Endothelial cell of umbilical vein (primary cell): ENCODE measurements at regions of chr2 and their contacts with region 1.

Region 1: DNA sequence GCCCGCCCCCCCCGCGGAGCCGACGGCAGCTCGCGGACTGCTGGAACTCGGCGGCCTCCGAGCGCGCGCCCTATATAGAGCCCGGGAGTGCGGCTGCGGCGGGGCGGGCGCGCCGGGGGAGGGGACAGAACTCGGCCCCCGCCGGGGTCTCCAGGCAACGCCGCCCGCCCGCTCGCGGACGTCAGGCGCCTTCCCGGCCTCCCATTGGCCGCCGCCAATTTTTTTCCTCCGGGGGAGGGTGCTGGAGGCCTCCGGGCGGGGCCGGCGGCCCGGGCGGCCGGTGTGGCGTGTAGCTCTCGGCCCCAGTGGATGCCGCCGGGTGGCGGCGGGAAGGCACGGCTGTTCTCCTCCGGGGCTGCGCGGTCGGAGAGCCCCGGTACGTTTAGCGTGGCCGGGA is at the start of gene ZFP36L2:
- DNase-seq: peak; percentile 91
- H3K4me3 ChIP-seq: peak within 1 kb of the TSS; percentile 71 to 93 (median 90)
- H3K27ac ChIP-seq: peak within 1 kb of the TSS; percentile 88
- H3K4me1 ChIP-seq: peaks cover 31% of the 10 kb centered on the region
- H3K27me3 ChIP-seq: no peaks in the 10 kb centered on the region
- CTCF ChIP-seq: no peak
- POLR2A ChIP-seq: peak; percentile 99
- total RNA-seq, gene ZFP36L2: 73.4 and 75.9 TPM in 2 replicates

Region 2: DNA sequence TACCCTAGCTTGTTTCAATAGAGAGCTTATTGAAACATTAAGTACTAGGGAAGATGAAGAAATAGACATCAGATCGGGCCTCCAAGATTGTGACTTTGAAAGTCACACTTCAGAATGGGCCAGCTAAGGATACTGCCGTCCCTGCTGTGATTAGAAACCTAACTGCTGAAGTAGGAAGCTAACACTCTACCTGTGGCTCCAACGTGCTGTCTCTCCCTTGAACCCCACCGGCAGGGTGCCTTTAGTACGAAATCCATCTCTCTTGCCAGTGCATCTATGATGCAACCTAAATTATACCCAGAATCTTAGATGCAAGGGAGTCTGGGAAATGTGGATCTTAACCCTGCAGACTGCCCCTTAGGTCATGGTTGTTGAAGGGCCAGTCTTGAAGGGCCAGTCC is 541.3 kb before region 1 on chr2:
- CTCF ChIA-PET with region 1: no interaction called
- POLR2A ChIA-PET with region 1: no interaction called
- dilution Hi-C with region 1: no loop called
- intact Hi-C with region 1: no loop called
- DNase-seq: no peak
- H3K4me3 ChIP-seq: no peak overlapping the region
- H3K27ac ChIP-seq: no peak overlapping the region
- H3K4me1 ChIP-seq: no peaks in the 10 kb centered on the region
- H3K27me3 ChIP-seq: no peaks in the 10 kb centered on the region
- CTCF ChIP-seq: no peak
- POLR2A ChIP-seq: no peak

Region 3: DNA sequence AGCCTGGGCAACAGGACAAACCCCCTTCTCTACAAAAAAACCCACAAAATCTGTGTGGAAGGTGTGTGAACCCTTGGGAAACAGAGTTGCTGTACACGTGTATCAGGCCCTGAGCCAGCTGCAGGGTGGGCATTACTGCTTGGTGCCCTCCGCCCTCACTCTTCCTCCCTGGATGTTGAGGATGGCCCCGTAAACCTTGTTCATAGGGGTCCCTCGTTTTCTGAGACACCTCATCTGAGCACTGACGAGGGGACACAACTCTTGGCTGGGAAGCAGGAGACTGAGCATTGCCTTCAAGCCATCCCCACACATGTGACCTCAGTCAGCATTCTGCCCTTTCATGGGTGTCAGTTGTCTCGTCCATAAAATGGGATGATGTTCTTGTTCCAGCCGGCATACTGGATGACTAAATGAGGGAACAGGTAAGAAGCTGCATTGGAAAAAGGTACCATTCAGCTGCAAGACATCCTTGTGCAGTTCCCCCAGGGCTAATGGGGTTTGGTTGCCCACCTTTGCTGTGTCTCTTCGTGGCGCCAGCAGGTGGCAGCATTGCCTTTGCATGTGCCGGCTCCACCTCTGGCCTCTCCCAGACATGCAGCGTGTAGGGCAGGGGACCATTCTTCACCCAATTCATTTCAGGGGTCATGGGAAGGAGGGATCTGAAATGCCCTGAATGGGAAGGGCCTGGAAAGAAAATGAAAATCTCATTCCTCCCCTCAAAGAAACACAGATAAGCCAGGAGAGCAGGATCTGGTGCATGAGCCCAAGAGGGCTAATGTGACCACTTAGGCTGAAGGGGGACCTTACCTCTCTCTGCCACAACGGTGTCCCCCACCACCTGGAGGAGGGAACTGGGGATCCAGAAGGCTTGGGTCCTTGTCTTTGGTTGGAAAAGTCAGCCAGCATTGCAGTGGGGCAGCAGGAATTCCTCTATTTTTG is 397.8 kb before region 1 on chr2:
- CTCF ChIA-PET with region 1: interaction called, 13 read pairs
- POLR2A ChIA-PET with region 1: interaction called, 3 read pairs
- dilution Hi-C with region 1: no loop called
- intact Hi-C with region 1: loop called (anchors 1 kb)
- DNase-seq: peak; percentile 66
- H3K4me3 ChIP-seq: no peak overlapping the region
- H3K27ac ChIP-seq: no peak overlapping the region
- H3K4me1 ChIP-seq: no peaks in the 10 kb centered on the region
- H3K27me3 ChIP-seq: no peaks in the 10 kb centered on the region
- CTCF ChIP-seq: peak; percentile 91 to 93
- POLR2A ChIP-seq: no peak

Region 4: DNA sequence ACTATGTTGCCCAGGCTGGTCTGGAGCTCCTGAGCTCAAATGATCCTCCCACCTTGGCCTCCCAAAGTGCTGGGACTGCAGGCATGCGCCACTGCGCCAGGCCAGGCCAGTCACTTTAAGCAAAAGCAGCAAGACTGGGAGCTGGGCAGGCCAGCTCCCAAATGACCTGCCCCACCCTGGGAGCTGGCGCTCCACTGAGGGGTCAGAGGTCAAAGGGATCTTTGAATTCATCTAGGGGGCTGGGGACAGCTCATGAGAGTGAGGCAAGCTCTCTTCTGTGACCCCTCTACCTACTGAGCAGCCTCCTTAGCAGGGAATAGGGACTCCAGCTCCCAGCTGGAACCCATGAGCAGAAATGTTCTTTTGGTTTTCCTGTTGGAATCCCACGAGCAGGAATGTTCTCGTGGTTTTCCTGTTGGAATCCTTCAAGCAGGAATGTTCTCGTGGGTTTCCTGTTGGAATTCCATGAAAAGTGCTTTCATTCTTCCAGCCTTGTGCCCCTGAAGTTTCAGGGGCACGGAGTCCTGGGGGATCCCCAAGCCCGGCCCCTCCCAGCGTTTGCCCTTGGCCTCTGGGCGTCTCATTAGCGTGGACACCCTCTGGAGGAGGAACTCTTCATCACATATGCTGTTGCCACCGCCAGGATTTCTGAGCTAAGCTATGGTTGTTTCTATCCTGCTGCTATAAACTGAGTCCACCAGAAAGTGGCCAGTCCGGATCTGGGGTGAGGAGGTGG is 272.2 kb before region 1 on chr2:
- CTCF ChIA-PET with region 1: interaction called, 8 read pairs
- POLR2A ChIA-PET with region 1: interaction called, 3 read pairs
- dilution Hi-C with region 1: no loop called
- intact Hi-C with region 1: loop called (anchors 1 kb)
- DNase-seq: no peak
- H3K4me3 ChIP-seq: no peak overlapping the region
- H3K27ac ChIP-seq: peak overlapping the region; percentile 65
- H3K4me1 ChIP-seq: peaks cover 30% of the 10 kb centered on the region
- H3K27me3 ChIP-seq: no peaks in the 10 kb centered on the region
- CTCF ChIP-seq: no peak
- POLR2A ChIP-seq: no peak

Region 5: GRCh38 chr2:43131024-43131889 is 95.3 kb before region 1 on chr2:
- CTCF ChIA-PET with region 1: interaction called, 31 read pairs
- POLR2A ChIA-PET with region 1: interaction called, 12 read pairs
- dilution Hi-C with region 1: no loop called
- intact Hi-C with region 1: loop called (anchors 1 kb)
- DNase-seq: peak; percentile 82
- H3K4me3 ChIP-seq: no peak overlapping the region
- H3K27ac ChIP-seq: peak overlapping the region; percentile 38
- H3K4me1 ChIP-seq: peaks cover 15% of the 10 kb centered on the region
- H3K27me3 ChIP-seq: no peaks in the 10 kb centered on the region
- CTCF ChIP-seq: peak; percentile 52 to 58
- POLR2A ChIP-seq: no peak

Region 6: GRCh38 chr2:43262951-43263350 is 36.4 kb after region 1 on chr2:
- CTCF ChIA-PET with region 1: no interaction called
- POLR2A ChIA-PET with region 1: no interaction called
- dilution Hi-C with region 1: no loop called
- intact Hi-C with region 1: no loop called
- DNase-seq: no peak
- H3K4me3 ChIP-seq: no peak overlapping the region
- H3K27ac ChIP-seq: no peak overlapping the region
- H3K4me1 ChIP-seq: no peaks in the 10 kb centered on the region
- H3K27me3 ChIP-seq: no peaks in the 10 kb centered on the region
- CTCF ChIP-seq: no peak
- POLR2A ChIP-seq: no peak

Region 7: GRCh38 chr2:43484323-43484930 is 257.9 kb after region 1 on chr2:
- CTCF ChIA-PET with region 1: interaction called, 92 read pairs
- POLR2A ChIA-PET with region 1: interaction called, 9 read pairs
- dilution Hi-C with region 1: no loop called
- intact Hi-C with region 1: loop called (anchors 1 kb)
- DNase-seq: peak; percentile 84
- H3K4me3 ChIP-seq: no peak overlapping the region
- H3K27ac ChIP-seq: no peak overlapping the region
- H3K4me1 ChIP-seq: peaks cover 7% of the 10 kb centered on the region
- H3K27me3 ChIP-seq: no peaks in the 10 kb centered on the region
- CTCF ChIP-seq: peak; percentile 31 to 32
- POLR2A ChIP-seq: no peak